Common myeloid progenitor, CD34-positive (primary cell): ENCODE measurements at regions of chr19 and their contacts with region 1.

Region 1: DNA sequence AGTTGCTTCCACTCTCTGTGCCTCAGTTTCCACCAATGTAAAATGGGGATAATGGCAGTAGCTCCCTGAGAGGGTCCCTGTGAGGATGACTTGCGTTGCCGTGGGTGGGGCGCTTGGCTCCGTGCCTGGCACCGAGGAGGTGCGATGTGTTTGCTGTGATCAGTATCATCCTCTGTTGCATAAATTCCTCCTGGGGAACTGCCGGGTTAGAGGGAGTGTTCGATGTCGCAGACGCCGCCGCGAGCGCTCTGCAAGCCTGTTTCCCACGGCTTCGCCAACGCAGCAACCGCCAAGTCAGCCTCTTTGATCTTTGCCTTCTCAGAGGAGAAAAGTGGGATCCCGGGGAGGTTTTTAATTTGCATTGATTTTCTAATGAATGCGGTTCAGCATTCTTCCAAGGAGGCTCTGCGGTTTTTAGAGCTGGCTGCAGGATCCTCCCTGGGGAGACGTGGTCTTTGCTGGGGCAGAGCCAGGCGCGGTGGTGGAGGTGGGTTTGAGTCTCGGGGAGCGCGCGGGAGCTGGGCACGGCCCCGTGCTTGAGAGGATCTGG is 7.6 kb downstream of the GPR32 start:
- DNase-seq: peak; percentile 36 to 70 (median 56)
- H3K4me3 ChIP-seq: no peak overlapping the region
- H3K27ac ChIP-seq: no peak overlapping the region
- H3K4me1 ChIP-seq: peaks cover 0 to 8% (median 3%) of the 10 kb centered on the region in 4 experiments
- H3K27me3 ChIP-seq: peaks cover 4 to 79% (median 29%) of the 10 kb centered on the region in 5 experiments

Region 2: DNA sequence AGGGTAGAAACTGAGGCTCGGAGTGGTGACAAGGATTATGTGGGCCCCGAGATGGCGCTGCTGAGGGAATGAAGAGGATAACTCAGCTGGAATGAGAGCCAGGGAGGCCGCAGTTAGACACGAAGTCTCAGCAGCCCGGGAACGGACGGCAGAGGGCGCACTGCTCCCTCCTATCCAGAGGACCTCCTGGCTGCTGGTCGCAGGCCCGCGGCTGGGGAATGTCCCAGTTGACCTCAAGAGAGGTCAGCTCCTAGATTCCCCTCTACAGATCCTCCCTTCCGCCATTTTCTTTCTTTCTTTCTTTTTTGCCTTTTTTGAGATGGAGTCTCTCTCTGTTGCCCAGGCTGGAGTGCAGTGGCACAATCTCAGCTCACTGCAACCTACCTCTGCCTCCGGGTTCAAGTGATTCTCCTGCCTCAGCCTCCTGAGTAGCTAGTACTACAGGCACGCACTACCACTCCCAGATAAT is 240.0 kb before region 1 on chr19:
- CTCF ChIA-PET with region 1: interaction called, 10 read pairs
- POLR2A ChIA-PET with region 1: no interaction called
- DNase-seq: peak; percentile 73 to 78 (median 78)
- H3K4me3 ChIP-seq: no peak overlapping the region
- H3K27ac ChIP-seq: no peak overlapping the region
- H3K4me1 ChIP-seq: no peaks in the 10 kb centered on the region
- H3K27me3 ChIP-seq: peaks cover 0 to 3% (median 0%) of the 10 kb centered on the region in 5 experiments

Region 3: DNA sequence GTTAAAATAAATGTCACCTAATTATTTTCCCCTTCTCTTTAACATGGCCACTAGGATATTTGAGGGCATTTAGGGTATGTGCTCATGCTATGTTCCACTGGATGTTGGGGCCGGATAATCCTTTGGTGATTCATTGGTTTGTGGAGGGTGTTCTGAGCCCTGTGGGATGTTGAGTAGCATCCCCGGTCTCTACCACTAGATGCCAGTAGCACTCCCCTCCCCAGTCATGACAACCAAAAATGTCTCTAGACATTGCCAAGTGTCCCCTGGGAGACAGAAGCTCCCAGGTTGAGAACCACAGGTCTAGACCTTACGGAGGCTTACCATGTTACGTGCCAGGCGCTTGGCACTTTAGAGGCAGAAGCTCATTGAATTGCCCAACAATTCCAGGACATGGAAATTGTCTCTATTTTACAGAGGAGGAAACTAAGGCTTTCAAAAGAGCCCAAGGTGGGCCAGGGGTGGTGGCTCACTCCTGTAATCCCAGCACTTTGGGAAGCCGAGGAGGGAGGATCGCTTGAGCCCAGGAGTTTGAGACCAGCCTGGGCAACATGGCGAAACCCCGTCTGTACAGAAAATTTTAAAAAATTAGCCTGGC is 72.3 kb before region 1 on chr19:
- CTCF ChIA-PET with region 1: interaction called, 36 read pairs
- POLR2A ChIA-PET with region 1: no interaction called
- DNase-seq: peak; percentile 67 to 82 (median 82)
- H3K4me3 ChIP-seq: no peak overlapping the region
- H3K27ac ChIP-seq: no peak overlapping the region
- H3K4me1 ChIP-seq: peaks cover 0 to 16% (median 7%) of the 10 kb centered on the region in 4 experiments
- H3K27me3 ChIP-seq: peaks cover 0 to 48% (median 11%) of the 10 kb centered on the region in 5 experiments

Region 4: DNA sequence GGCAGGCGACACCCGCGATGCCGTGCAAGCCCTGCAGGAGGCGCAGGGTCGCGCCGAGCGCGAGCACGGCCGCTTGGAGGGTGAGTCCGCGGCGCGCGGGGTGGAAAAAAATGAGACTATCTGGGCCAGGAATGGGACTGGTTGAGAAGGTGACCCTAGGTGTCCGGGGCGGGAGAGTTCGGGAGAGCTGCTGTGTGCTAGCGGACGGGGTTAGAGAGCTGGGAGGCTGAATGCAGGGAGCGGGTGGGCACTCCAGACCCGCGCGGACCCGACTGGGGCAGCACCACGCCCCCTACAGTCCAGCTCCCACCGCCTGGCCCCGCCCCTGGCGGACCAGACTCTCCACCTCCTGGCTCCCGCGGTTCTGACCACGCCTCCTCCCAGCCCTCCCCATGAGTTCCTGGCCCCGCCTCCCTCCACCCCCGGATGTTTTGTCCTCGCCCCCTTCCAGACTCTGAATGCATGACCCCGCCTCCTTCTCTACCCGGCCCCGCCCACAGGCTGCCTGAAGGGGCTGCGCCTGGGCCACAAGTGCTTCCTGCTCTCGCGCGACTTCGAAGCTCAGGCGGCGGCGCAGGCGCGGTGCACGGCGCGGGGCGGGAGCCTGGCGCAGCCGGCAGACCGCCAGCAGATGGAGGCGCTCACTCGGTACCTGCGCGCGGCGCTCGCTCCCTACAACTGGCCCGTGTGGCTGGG is 53.2 kb before region 1 on chr19:
- CTCF ChIA-PET with region 1: interaction called, 26 read pairs
- POLR2A ChIA-PET with region 1: interaction called, 3 read pairs
- DNase-seq: peak; percentile 99 to 100 (median 99)
- H3K4me3 ChIP-seq: peak overlapping the region; percentile 54 to 87 (median 68)
- H3K27ac ChIP-seq: peak overlapping the region in 1 of 2 experiments; percentile 78
- H3K4me1 ChIP-seq: peaks cover 5 to 61% (median 36%) of the 10 kb centered on the region in 4 experiments
- H3K27me3 ChIP-seq: peaks cover 0 to 44% (median 26%) of the 10 kb centered on the region in 5 experiments

Region 5: GRCh38 chr19:50764409-50764808 is 13.4 kb before region 1 on chr19:
- CTCF ChIA-PET with region 1: no interaction called
- POLR2A ChIA-PET with region 1: no interaction called
- DNase-seq: no peak
- H3K4me3 ChIP-seq: no peak overlapping the region
- H3K27ac ChIP-seq: no peak overlapping the region
- H3K4me1 ChIP-seq: peaks cover 0 to 10% (median 3%) of the 10 kb centered on the region in 4 experiments
- H3K27me3 ChIP-seq: no peaks in the 10 kb centered on the region

Region 6: DNA sequence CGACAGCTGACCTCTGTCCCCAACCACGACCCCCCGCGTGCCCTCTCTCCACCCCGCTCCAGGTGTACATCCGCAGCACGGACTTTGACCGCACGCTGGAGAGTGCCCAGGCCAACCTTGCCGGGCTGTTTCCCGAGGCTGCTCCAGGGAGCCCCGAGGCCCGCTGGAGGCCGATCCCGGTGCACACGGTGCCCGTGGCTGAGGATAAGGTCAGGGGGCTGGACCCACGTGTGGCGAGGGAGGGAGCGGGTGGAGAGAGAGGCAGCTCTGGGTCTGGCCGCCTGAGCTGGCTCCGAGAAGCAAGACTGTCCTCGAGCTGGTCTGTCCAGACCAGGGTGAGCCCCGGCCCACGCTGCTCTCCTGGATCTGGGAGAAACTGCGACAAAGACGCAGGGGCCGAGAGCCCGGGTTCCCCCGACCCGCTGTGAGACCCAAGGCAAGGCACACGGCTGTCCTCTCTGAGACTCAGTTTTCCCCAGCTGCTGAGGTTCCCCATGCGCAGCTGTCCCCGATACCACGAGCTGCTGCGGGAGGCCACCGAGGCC is 13.8 kb after region 1 on chr19:
- CTCF ChIA-PET with region 1: interaction called, 11 read pairs
- POLR2A ChIA-PET with region 1: no interaction called
- DNase-seq: no peak
- H3K4me3 ChIP-seq: no peak overlapping the region
- H3K27ac ChIP-seq: no peak overlapping the region
- H3K4me1 ChIP-seq: peaks cover 0 to 10% (median 2%) of the 10 kb centered on the region in 4 experiments
- H3K27me3 ChIP-seq: no peaks in the 10 kb centered on the region